Psoas muscle (tissue), 8 donors: ENCODE measurements at regions of chr12 and their contacts with region 1.

Region 1: GRCh38 chr12:105120551-105120950 is 13.0 kb downstream of the WASHC4 start:
- DNase-seq: no peak
- ATAC-seq: no peak
- H3K4me3 ChIP-seq: no peak overlapping the region
- H3K27ac ChIP-seq: no peak overlapping the region
- H3K4me1 ChIP-seq: no peaks in the 10 kb centered on the region
- H3K27me3 ChIP-seq: no peaks in the 10 kb centered on the region
- CTCF ChIP-seq: no peak

Region 2: DNA sequence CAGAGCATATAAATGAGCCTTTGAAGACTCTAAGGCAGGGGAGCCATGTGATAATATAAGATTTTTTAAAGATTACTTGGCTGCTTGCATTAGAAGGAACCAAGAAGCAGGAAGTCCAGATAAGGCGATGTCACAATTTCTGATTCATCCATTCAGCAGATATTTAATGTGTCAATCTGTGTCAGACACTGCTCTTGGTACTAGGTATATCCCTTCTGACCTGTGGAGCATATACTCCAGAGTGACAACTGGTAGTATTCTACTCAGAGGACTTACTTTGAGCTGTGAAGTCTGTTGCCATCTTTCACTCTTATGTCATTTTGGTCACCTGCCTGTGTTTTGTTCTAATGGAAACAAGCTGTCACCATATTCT is 806.3 kb before region 1 on chr12:
- intact Hi-C with region 1: loop called in 1 of 2 experiments (anchors 10 kb)
- DNase-seq: no peak
- ATAC-seq: peak; percentile 40 to 64 (median 55)
- H3K4me3 ChIP-seq: no peak overlapping the region
- H3K27ac ChIP-seq: peak overlapping the region; percentile 42
- H3K4me1 ChIP-seq: no peaks in the 10 kb centered on the region
- H3K27me3 ChIP-seq: no peaks in the 10 kb centered on the region
- CTCF ChIP-seq: no peak

Region 3: GRCh38 chr12:105171691-105172436 is 51.3 kb after region 1 on chr12:
- intact Hi-C with region 1: loop called in 1 of 2 experiments (anchors 10 kb)
- DNase-seq: no peak
- ATAC-seq: no peak
- H3K4me3 ChIP-seq: no peak overlapping the region
- H3K27ac ChIP-seq: no peak overlapping the region
- H3K4me1 ChIP-seq: no peaks in the 10 kb centered on the region
- H3K27me3 ChIP-seq: no peaks in the 10 kb centered on the region
- CTCF ChIP-seq: no peak